ENCODE measurements at regions of chr6 and their contacts with region 1.

Region 1: GRCh38 chr6:149082286-149082707 is 235.2 kb upstream of the TAB2 start:
- DNase-seq: peak; percentile 77 to 82
- ATAC-seq: peak; percentile 72 to 85 (median 74)
- H3K4me3 ChIP-seq: no peak overlapping the region
- H3K27ac ChIP-seq: no peak overlapping the region
- H3K4me1 ChIP-seq: no peaks in the 10 kb centered on the region
- H3K27me3 ChIP-seq: peaks cover 0 to 2% (median 0%) of the 10 kb centered on the region in 3 donors
- CTCF ChIP-seq: peak; percentile 79

Region 2: GRCh38 chr6:149028767-149029405 is 53.4 kb before region 1 on chr6:
- intact Hi-C with region 1: loop called in 1 of 2 experiments (anchors 5 kb)
- DNase-seq: no peak
- ATAC-seq: peak; percentile 67 to 84 (median 70)
- H3K4me3 ChIP-seq: no peak overlapping the region
- H3K27ac ChIP-seq: no peak overlapping the region
- H3K4me1 ChIP-seq: no peaks in the 10 kb centered on the region
- H3K27me3 ChIP-seq: no peaks in the 10 kb centered on the region
- CTCF ChIP-seq: peak; percentile 77

Region 3: DNA sequence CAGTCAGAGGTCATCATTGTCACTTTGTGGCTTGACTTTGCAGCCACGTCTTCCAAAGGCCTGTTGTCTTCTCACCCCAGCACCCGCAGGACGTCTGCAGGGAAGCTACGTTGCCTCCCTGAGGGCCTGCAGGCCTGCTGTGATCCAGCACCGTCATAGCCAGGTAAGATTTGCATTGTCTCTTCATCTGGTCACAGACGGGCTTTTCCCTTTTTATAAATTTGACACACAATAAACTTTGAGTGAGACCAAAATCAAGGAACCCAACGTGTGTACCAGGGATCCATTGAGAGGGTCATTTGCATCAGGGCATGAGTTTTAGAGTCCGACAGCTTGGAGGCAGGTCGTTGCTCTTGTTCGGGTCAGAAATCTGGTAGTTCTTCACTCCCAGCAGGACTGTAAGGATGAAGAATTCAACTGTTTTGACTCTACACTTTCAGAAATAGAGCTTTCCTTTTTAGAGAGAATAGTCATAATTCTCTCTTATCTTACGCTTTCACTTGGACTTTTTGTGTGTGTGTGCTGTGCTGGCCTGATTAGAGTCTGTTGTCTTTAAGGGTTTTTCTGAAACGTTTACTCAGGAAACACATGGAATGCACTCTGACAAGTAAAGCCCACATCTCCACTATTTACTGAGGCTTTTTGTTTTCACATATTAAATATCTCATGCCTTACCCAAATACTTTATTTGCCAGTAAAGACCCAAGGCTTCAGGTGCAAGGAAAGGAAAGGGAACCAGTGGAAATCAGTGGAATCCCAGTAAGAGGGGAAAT is 58.0 kb after region 1 on chr6:
- intact Hi-C with region 1: no loop called
- DNase-seq: no peak
- ATAC-seq: no peak
- H3K4me3 ChIP-seq: no peak overlapping the region
- H3K27ac ChIP-seq: no peak overlapping the region
- H3K4me1 ChIP-seq: no peaks in the 10 kb centered on the region
- H3K27me3 ChIP-seq: peaks cover 0 to 2% (median 0%) of the 10 kb centered on the region in 3 donors
- CTCF ChIP-seq: no peak

Region 4: GRCh38 chr6:149316798-149317655 is 234.7 kb after region 1 on chr6:
- intact Hi-C with region 1: loop called in 1 of 2 experiments (anchors 5 kb)
- DNase-seq: peak; percentile 92 to 95
- ATAC-seq: peak; percentile 94 to 96 (median 95)
- H3K4me3 ChIP-seq: peak overlapping the region; percentile 97
- H3K27ac ChIP-seq: peak overlapping the region; percentile 97
- H3K4me1 ChIP-seq: peaks cover 23% of the 10 kb centered on the region
- H3K27me3 ChIP-seq: no peaks in the 10 kb centered on the region
- CTCF ChIP-seq: peak; percentile 13

Region 5: GRCh38 chr6:149431905-149432775 is 349.8 kb after region 1 on chr6:
- intact Hi-C with region 1: loop called (anchors 1 to 2 kb)
- DNase-seq: peak; percentile 88 to 93
- ATAC-seq: peak; percentile 93 to 98 (median 96)
- H3K4me3 ChIP-seq: no peak overlapping the region
- H3K27ac ChIP-seq: no peak overlapping the region
- H3K4me1 ChIP-seq: no peaks in the 10 kb centered on the region
- H3K27me3 ChIP-seq: no peaks in the 10 kb centered on the region
- CTCF ChIP-seq: peak; percentile 99

Region 6: DNA sequence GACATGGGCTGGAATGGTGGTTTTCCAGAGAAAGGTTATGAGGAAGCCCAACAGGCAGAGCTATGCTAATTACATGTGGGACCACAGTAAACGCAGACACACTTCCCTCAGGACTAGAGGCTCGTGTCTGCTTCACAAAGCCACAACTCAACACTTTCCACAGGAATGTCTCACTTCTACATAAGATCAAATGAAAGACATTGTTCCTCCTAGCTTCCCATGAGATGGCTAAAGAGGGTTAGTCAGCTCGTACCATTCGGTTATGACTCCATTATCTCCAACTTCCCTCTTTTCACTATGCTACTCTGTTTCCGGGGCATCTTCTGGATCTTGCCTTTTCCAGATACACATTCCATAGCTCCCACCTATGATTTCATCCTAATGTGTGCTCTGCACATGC is 431.6 kb after region 1 on chr6:
- intact Hi-C with region 1: loop called in 1 of 2 experiments (anchors 5 kb)
- DNase-seq: no peak
- ATAC-seq: no peak
- H3K4me3 ChIP-seq: no peak overlapping the region
- H3K27ac ChIP-seq: no peak overlapping the region
- H3K4me1 ChIP-seq: no peaks in the 10 kb centered on the region
- H3K27me3 ChIP-seq: no peaks in the 10 kb centered on the region
- CTCF ChIP-seq: no peak

Measured in psoas muscle (tissue), 8 donors.